ENCODE measurements at regions of chr21 and their contacts with region 1.

Region 1: GRCh38 chr21:38289705-38290485 is 33.1 kb downstream of the KCNJ15 start:
- DNase-seq: peak in 2 of 3 donors; percentile 23 to 50
- ATAC-seq: peak; percentile 75 to 76
- H3K4me3 ChIP-seq: no peak overlapping the region
- H3K27ac ChIP-seq: no peak overlapping the region
- H3K4me1 ChIP-seq: peaks cover 2% of the 10 kb centered on the region
- H3K27me3 ChIP-seq: no peaks in the 10 kb centered on the region

Region 2: GRCh38 chr21:37532868-37533780 is 756.8 kb before region 1 on chr21:
- intact Hi-C with region 1: no loop called
- DNase-seq: peak in 1 of 3 donors; percentile 71
- ATAC-seq: peak; percentile 26 to 30
- H3K4me3 ChIP-seq: no peak overlapping the region
- H3K27ac ChIP-seq: no peak overlapping the region
- H3K4me1 ChIP-seq: peaks cover 3% of the 10 kb centered on the region
- H3K27me3 ChIP-seq: no peaks in the 10 kb centered on the region

Region 3: DNA sequence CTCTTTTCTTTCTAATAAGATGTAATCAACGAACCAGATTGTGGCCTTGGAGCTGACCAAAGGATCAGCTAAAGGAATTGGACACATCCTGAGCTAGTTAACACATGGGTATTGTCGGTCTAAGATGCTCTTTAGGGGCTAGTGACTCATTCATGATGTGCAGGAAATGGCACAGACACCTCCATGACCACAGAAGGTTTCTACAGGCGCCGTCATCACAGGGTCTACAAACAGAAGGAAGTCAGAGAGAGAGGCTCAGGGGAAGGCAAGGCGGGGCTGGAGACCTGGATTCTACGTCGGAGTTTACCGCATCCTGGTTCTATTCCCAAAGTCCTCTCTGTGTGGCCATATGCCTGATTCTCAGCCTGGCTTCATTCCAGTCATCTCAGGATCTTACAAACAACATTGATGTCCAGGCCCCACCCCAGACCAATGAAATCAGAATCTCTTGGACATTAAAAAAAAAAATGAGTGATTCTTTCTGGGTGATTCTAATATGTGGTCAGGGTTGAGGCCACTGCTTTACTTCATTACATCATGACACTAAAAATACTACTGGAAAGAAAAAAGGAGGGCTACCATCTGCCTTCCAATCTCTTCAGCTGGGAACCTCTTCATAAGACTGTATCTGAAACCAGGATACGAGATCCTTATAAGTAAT is 44.9 kb before region 1 on chr21:
- intact Hi-C with region 1: loop called in 1 of 4 experiments (anchors 10 kb)
- DNase-seq: no peak
- ATAC-seq: no peak
- H3K4me3 ChIP-seq: no peak overlapping the region
- H3K27ac ChIP-seq: no peak overlapping the region
- H3K4me1 ChIP-seq: no peaks in the 10 kb centered on the region
- H3K27me3 ChIP-seq: no peaks in the 10 kb centered on the region

Measured in right cardiac atrium (tissue), 5 donors.